HEK293 (cell line): ENCODE measurements at regions of chr6 and their contacts with region 1.

Region 1: GRCh38 chr6:33620856-33621710 is at the start of gene ITPR3:
- H3K4me3 ChIP-seq: peak within 1 kb of the TSS; percentile 70
- H3K27ac ChIP-seq: peak within 1 kb of the TSS; percentile 77; the same call in 1 of the 2 replicates
- H3K4me1 ChIP-seq: peaks cover 10% of the 10 kb centered on the region
- CTCF ChIP-seq: no peak

Region 2: GRCh38 chr6:33579828-33580714 is 41.0 kb before region 1 on chr6 and contains the start of gene BAK1:
- CTCF ChIA-PET with region 1: interaction called, 5 read pairs
- POLR2A ChIA-PET with region 1: interaction called, 10 read pairs
- H3K4me3 ChIP-seq: peak within 1 kb of the TSS; percentile 90
- H3K27ac ChIP-seq: peak within 1 kb of the TSS; percentile 71; the same call in 1 of the 2 replicates
- H3K4me1 ChIP-seq: no peaks in the 10 kb centered on the region; the same call in 1 of the 2 replicates
- CTCF ChIP-seq: peak; percentile 89

Region 3: DNA sequence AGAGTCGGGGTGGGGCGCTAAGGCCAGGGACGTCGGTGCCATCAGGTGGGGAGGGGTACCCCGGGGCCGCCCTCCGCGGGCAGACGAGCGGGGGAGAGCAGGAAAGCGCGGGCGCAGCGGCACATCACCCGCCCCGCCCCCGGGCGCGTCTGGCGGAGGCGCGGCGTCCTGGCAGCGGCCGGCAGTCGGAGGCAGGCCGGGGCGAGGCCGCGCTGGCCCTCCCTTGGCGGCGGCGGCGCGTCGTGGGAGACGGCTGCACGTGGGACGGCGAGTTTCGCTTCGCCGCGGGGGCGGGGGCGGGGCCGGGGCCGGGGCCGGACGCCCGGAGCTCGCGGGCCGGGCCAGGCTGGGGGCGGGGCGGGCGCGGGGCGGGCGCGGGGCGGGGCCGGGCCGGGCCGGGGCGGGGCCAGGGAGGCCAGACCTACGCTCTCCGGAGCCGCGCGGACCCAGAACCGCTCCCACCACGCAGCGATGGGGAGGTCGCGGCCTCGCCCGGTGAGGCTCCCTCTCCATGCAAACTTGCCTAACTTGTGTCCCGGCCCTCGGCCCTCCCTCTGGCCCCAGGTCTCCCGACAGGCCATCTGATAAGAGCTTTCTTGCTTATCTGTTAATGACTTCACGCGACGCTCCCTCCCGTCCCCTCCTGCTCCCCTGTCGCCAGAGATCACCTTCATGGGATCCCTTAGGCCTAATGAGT is 12.5 kb after region 1 on chr6:
- CTCF ChIA-PET with region 1: interaction called, 22 read pairs
- POLR2A ChIA-PET with region 1: interaction called, 19 read pairs
- H3K4me3 ChIP-seq: peak overlapping the region; percentile 48
- H3K27ac ChIP-seq: no peak overlapping the region; the same call in 1 of the 2 replicates
- H3K4me1 ChIP-seq: peaks cover 7% of the 10 kb centered on the region
- CTCF ChIP-seq: no peak